ENCODE measurements at regions of chr7 and their contacts with region 1.

Region 1: GRCh38 chr7:8190119-8190895 is 71.7 kb downstream of the ICA1 start:
- DNase-seq: peak; percentile 67 to 77 (median 68)
- H3K4me3 ChIP-seq: no peak overlapping the region
- H3K4me3 Mint-ChIP-seq: no peak overlapping the region
- H3K27ac ChIP-seq: no peak overlapping the region
- H3K27ac Mint-ChIP-seq: peak overlapping the region in 2 of 7 donors; percentile 8 to 48
- H3K4me1 ChIP-seq: peaks cover 7% of the 10 kb centered on the region
- H3K4me1 Mint-ChIP-seq: peaks cover 13 to 22% (median 18%) of the 10 kb centered on the region in 4 donors
- H3K27me3 ChIP-seq: no peaks in the 10 kb centered on the region
- H3K27me3 Mint-ChIP-seq: no peaks in the 10 kb centered on the region

Region 2: DNA sequence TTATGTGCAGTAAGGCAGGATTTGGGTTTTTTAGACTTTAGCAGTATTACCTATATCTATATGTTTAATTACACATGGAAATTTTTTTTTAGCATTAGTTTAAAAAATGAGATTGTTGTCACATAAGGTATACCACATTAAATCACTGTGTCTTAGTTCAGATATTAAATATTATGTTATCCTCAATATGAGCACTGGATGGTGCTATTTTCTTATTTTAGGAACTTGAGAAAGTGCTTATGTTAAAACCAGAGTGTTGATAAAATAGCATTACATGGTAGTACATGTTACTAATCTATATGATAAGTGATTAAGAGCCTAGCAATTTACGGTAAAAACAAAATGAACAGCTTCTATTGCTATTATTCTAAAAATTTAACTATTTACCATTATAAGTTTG is 594.9 kb before region 1 on chr7:
- CTCF ChIA-PET with region 1: interaction called, 12 read pairs
- POLR2A ChIA-PET with region 1: no interaction called
- intact Hi-C with region 1: loop called (anchors 1 kb)
- DNase-seq: peak in 4 of 5 donors; percentile 30 to 36 (median 34)
- H3K4me3 ChIP-seq: no peak overlapping the region
- H3K4me3 Mint-ChIP-seq: no peak overlapping the region
- H3K27ac ChIP-seq: no peak overlapping the region
- H3K27ac Mint-ChIP-seq: no peak overlapping the region
- H3K4me1 ChIP-seq: no peaks in the 10 kb centered on the region
- H3K4me1 Mint-ChIP-seq: no peaks in the 10 kb centered on the region
- H3K27me3 ChIP-seq: no peaks in the 10 kb centered on the region
- H3K27me3 Mint-ChIP-seq: no peaks in the 10 kb centered on the region

Region 3: DNA sequence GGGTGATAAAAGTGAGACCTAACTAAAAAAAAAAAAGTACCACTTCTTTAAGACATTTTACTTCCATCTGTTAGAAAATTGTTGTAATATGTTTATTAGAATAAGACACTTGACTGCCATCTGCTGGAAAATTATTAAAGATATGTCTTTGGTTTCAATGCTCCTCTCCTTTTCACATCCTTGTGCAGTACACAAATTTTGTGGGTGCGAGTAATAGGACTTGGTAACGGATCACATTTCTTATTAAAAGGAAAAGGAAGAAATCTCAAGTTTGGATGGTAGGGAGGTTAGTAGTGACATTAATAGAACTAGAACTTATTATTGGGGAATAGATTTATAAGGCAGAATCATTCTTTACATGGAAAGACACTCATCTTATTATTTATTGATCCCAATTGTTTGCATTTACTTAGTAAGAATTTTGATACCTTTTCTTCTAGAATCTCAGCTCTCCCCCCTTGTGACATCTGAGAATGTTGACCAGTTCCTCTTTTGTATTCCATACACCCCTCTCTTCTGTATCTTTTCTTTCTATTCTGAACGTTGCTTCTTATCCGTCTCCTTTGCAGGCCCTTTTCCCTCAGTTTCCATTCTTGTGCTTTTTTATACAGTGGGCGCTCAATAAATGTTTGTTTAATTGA is 428.8 kb before region 1 on chr7:
- CTCF ChIA-PET with region 1: interaction called, 4 read pairs
- POLR2A ChIA-PET with region 1: no interaction called
- intact Hi-C with region 1: loop called (anchors 1 kb)
- DNase-seq: peak in 4 of 5 donors; percentile 46 to 56 (median 49)
- H3K4me3 ChIP-seq: peak overlapping the region; percentile 4 to 75
- H3K4me3 Mint-ChIP-seq: peak overlapping the region; percentile 81 to 98 (median 92)
- H3K27ac ChIP-seq: peak overlapping the region; percentile 67
- H3K27ac Mint-ChIP-seq: peak overlapping the region; percentile 89 to 98 (median 95)
- H3K4me1 ChIP-seq: peaks cover 35% of the 10 kb centered on the region
- H3K4me1 Mint-ChIP-seq: peaks cover 35 to 40% (median 39%) of the 10 kb centered on the region in 4 donors
- H3K27me3 ChIP-seq: no peaks in the 10 kb centered on the region
- H3K27me3 Mint-ChIP-seq: no peaks in the 10 kb centered on the region

Region 4: DNA sequence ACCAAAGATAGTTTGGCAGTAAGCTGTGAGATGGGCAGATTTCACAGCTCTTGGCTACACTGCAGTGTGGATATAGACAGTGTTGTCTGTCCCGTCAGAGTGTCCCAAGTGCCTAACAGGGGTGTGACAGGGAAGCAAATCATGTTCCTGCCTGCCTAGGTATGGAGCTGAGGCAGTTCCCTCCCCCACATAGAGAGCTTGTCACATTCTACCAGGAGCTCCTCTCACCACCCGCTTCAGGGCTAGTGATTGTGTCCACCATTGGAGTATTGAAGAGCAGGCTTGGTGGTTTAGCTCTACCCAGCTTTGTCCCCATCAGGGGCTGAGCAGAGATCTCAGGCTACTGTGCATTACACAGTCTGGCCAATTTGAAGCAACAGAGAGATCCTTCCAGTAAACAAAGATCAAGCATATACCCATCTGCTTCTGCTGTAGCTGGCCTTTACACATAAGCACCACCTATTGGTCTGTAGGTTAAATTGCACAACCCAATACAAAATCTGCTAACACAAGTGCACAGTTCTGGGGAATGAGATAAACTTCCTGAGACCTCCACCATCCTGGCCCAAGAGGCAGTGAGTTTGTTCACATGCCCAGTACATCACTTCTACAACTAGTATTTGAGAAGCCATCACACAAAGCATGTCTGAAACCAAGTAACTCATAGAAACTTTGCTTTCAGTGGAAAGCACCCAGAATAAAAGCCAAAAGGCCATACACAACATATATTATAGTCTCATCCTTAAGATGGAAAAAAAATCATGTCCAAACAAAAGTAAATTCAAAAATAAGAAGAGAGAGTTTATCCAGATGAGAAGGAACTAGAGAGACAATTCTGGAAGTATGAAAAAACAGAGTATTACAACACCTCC is 154.4 kb before region 1 on chr7:
- CTCF ChIA-PET with region 1: interaction called, 17 read pairs
- POLR2A ChIA-PET with region 1: no interaction called
- intact Hi-C with region 1: loop called (anchors 2 kb)
- DNase-seq: peak in 4 of 5 donors; percentile 32 to 51 (median 41)
- H3K4me3 ChIP-seq: no peak overlapping the region
- H3K4me3 Mint-ChIP-seq: no peak overlapping the region
- H3K27ac ChIP-seq: no peak overlapping the region
- H3K27ac Mint-ChIP-seq: peak overlapping the region; percentile 16 to 86 (median 58)
- H3K4me1 ChIP-seq: peaks cover 20% of the 10 kb centered on the region
- H3K4me1 Mint-ChIP-seq: peaks cover 27 to 41% (median 30%) of the 10 kb centered on the region in 4 donors
- H3K27me3 ChIP-seq: no peaks in the 10 kb centered on the region
- H3K27me3 Mint-ChIP-seq: no peaks in the 10 kb centered on the region

Region 5: GRCh38 chr7:8070451-8071180 is 119.7 kb before region 1 on chr7:
- CTCF ChIA-PET with region 1: interaction called, 7 read pairs
- POLR2A ChIA-PET with region 1: no interaction called
- intact Hi-C with region 1: loop called (anchors 5 kb)
- DNase-seq: no peak
- H3K4me3 ChIP-seq: no peak overlapping the region
- H3K4me3 Mint-ChIP-seq: no peak overlapping the region
- H3K27ac ChIP-seq: no peak overlapping the region
- H3K27ac Mint-ChIP-seq: peak overlapping the region in 1 of 7 donors; percentile 19
- H3K4me1 ChIP-seq: peaks cover 18% of the 10 kb centered on the region
- H3K4me1 Mint-ChIP-seq: peaks cover 33 to 45% (median 40%) of the 10 kb centered on the region in 4 donors
- H3K27me3 ChIP-seq: no peaks in the 10 kb centered on the region
- H3K27me3 Mint-ChIP-seq: no peaks in the 10 kb centered on the region

Region 6: GRCh38 chr7:8134089-8134733 is 56.1 kb before region 1 on chr7:
- CTCF ChIA-PET with region 1: interaction called, 5 read pairs
- POLR2A ChIA-PET with region 1: interaction called, 9 read pairs
- intact Hi-C with region 1: loop called (anchors 1 kb)
- DNase-seq: peak; percentile 38 to 63 (median 48)
- H3K4me3 ChIP-seq: peak overlapping the region in 1 of 2 donors; percentile 15
- H3K4me3 Mint-ChIP-seq: peak overlapping the region; percentile 17 to 85 (median 59)
- H3K27ac ChIP-seq: peak overlapping the region; percentile 57
- H3K27ac Mint-ChIP-seq: peak overlapping the region; percentile 93 to 100 (median 97)
- H3K4me1 ChIP-seq: peaks cover 74% of the 10 kb centered on the region
- H3K4me1 Mint-ChIP-seq: peaks cover 48 to 88% (median 68%) of the 10 kb centered on the region in 4 donors
- H3K27me3 ChIP-seq: no peaks in the 10 kb centered on the region
- H3K27me3 Mint-ChIP-seq: no peaks in the 10 kb centered on the region

Region 7: GRCh38 chr7:8169171-8169570 is 21.1 kb before region 1 on chr7:
- CTCF ChIA-PET with region 1: no interaction called
- POLR2A ChIA-PET with region 1: no interaction called
- intact Hi-C with region 1: no loop called
- DNase-seq: no peak
- H3K4me3 ChIP-seq: no peak overlapping the region
- H3K4me3 Mint-ChIP-seq: no peak overlapping the region
- H3K27ac ChIP-seq: no peak overlapping the region
- H3K27ac Mint-ChIP-seq: no peak overlapping the region
- H3K4me1 ChIP-seq: no peaks in the 10 kb centered on the region
- H3K4me1 Mint-ChIP-seq: peaks cover 9 to 19% (median 12%) of the 10 kb centered on the region in 4 donors
- H3K27me3 ChIP-seq: no peaks in the 10 kb centered on the region
- H3K27me3 Mint-ChIP-seq: no peaks in the 10 kb centered on the region

Measured in CD4-positive, alpha-beta memory T cell (primary cell).